Activated CD8-positive, alpha-beta memory T cell treated with anti-CD3 and anti-CD28 coated beads, Interleukin-2, amount 10 ng/mL, durations not matched to agents 7 days and 5 days (primary cell): ENCODE measurements at regions of chr19 and their contacts with region 1.

Region 1: DNA sequence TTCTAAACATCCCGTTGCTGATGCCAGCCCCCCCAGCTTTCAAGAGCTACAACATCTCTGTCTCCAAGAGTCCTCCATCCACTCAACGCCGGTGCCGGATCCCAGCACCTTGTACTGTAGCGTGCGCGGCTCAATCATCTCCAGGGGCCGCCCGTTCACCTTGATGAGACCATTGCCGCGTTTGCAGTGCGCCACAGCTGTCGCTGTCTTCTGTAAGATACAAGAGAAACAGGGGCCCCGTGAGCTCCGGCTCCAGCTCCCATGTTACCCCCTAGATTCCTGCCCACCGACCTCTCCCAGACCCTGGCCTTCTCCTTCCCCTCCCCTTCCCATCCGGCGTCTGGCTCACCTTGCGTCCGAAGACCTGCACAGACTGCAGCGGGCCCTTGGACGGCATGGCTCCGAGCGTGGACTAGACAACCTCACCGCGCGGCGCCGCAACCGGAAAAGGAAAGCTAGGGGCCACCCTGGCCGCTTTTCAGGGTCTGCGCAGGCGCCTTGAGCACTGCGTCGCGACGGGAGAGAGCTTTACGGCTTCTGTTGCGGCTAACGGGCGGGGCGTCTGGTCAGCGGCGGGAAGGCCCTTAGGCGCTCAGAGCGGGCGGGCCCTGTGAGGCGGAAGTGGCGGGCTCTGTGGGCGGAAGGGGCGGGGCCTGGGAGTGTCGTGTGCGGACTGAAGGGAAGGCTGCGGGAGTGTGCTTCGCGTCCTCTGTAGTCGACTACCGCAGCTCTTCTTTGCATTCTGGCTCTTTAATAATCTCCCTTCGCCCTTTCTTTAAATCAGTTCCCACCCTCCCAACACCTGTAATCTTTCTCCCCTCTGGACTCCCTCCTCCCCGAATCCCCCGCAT is at the start of gene RPS16:
- DNase-seq: peak; percentile 99
- ATAC-seq: peak; percentile 87
- H3K4me3 Mint-ChIP-seq: peak within 1 kb of the TSS; percentile 99
- H3K27ac Mint-ChIP-seq: peak within 1 kb of the TSS; percentile 99
- H3K4me1 Mint-ChIP-seq: peaks cover 55% of the 10 kb centered on the region
- H3K27me3 Mint-ChIP-seq: peaks cover 4% of the 10 kb centered on the region
- total RNA-seq, gene RPS16: 1,815 to 2,117 TPM

Region 2: GRCh38 chr19:39483141-39483540 is 47.4 kb after region 1 on chr19:
- CTCF ChIA-PET with region 1: no interaction called
- DNase-seq: no peak
- ATAC-seq: no peak
- H3K4me3 Mint-ChIP-seq: no peak overlapping the region
- H3K27ac Mint-ChIP-seq: no peak overlapping the region
- H3K4me1 Mint-ChIP-seq: peaks cover 27% of the 10 kb centered on the region
- H3K27me3 Mint-ChIP-seq: no peaks in the 10 kb centered on the region

Region 3: GRCh38 chr19:39542206-39542605 is 106.5 kb after region 1 on chr19:
- CTCF ChIA-PET with region 1: interaction called, 10 read pairs
- DNase-seq: no peak
- ATAC-seq: no peak
- H3K4me3 Mint-ChIP-seq: no peak overlapping the region
- H3K27ac Mint-ChIP-seq: no peak overlapping the region
- H3K4me1 Mint-ChIP-seq: peaks cover 51% of the 10 kb centered on the region
- H3K27me3 Mint-ChIP-seq: peaks cover 2% of the 10 kb centered on the region